Thyroid gland (tissue), 4 donors: ENCODE measurements at regions of chr3 and their contacts with region 1.

Region 1: GRCh38 chr3:72949016-72949415 is 47.6 kb upstream of the PPP4R2 start:
- DNase-seq: no peak
- H3K4me3 ChIP-seq: no peak overlapping the region
- H3K27ac ChIP-seq: no peak overlapping the region
- H3K4me1 ChIP-seq: peaks cover 0 to 10% of the 10 kb centered on the region in 2 donors
- H3K27me3 ChIP-seq: no peaks in the 10 kb centered on the region
- CTCF ChIP-seq: no peak
- POLR2A ChIP-seq: no peak

Region 2: DNA sequence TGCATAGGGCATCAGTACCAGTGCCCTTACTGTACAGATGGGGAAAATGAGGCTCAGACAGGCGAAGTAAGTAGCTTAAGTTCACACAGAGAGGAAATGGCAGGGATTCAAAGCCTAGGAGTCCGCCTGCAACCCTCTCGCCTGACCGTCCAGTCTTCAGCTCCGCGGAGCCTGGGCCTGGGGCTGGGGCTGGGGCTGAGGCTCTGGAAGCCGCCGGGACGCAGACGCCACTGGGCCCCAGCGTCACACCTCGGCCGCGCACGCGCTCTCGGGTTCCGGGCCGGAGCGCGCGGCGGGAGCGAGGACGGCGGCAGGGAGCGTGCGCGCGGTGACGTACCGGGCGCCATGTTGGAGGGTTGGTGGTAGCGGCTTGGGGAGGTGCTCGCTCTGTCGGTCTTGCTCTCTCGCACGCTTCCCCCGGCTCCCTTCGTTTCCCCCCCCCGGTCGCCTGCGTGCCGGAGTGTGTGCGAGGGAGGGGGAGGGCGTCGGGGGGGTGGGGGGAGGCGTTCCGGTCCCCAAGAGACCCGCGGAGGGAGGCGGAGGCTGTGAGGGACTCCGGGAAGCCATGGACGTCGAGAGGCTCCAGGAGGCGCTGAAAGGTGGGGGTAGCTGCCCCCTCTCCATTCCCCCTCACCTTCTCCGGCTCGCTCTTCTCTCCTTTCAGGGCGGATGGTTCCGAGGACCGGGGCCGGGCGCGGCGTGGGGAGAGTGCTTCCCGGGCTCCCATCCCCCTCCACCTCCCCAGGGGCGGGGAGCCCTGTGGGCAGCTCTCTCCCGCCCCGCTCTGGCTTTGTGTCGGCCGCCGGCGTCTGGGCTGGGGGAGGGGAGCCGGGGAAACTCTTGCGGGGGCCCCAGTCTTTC is 47.7 kb after region 1 on chr3 and contains the start of gene PPP4R2:
- intact Hi-C with region 1: loop called (anchors 10 kb)
- DNase-seq: peak; percentile 85
- H3K4me3 ChIP-seq: peak within 1 kb of the TSS; percentile 72 to 97 (median 88)
- H3K27ac ChIP-seq: peak within 1 kb of the TSS; percentile 96 to 99 (median 98)
- H3K4me1 ChIP-seq: peaks cover 29 to 34% of the 10 kb centered on the region in 2 donors
- H3K27me3 ChIP-seq: no peaks in the 10 kb centered on the region
- CTCF ChIP-seq: no peak
- POLR2A ChIP-seq: peak; percentile 60 to 90
- total RNA-seq, gene PPP4R2: 51.5 to 71.3 (median 66.0) TPM

Region 3: DNA sequence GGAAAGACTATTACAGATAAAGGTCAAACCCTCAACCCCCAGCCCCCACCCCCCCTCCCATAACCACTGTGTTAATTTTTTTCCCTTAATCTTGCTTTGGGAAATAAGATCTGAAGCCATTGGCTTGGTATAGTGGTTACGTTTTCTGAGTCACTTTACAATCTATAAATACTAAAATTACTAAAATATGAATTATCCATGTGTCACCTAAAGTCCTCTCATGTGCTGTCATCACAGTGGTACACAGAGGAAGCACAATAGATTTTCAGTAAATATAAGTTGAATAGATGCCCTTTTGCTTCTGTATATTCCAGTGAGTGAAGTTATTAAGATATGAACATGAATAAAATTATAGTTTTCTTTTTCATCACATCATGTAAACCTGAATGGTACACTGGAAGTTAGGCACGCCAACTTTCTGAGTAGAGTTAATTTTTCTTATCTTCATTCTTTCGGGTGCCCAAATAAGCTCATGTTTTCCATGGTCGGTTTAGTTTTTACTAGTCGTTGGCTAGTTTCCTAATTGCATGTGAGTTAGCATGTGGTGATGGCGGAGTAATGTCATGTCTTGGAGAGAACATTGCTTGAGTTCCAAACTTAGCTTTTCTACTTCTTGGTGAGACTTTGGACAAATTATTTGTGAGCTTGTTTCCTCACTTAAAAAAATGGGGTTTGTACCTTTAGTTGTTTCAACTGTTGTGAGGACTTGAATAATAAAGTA is 59.1 kb after region 1 on chr3:
- intact Hi-C with region 1: no loop called
- DNase-seq: no peak
- H3K4me3 ChIP-seq: no peak overlapping the region
- H3K27ac ChIP-seq: no peak overlapping the region
- H3K4me1 ChIP-seq: peaks cover 12 to 24% of the 10 kb centered on the region in 2 donors
- H3K27me3 ChIP-seq: no peaks in the 10 kb centered on the region
- CTCF ChIP-seq: no peak
- POLR2A ChIP-seq: no peak